Mammary epithelial cell (primary cell): ENCODE measurements at regions of chr1 and their contacts with region 1.

Region 1: GRCh38 chr1:16276302-16277030 is 39.5 kb upstream of the CPLANE2 start:
- DNase-seq: no peak
- H3K4me3 ChIP-seq: no peak overlapping the region
- H3K27ac ChIP-seq: no peak overlapping the region
- H3K4me1 ChIP-seq: no peaks in the 10 kb centered on the region
- H3K27me3 ChIP-seq: no peaks in the 10 kb centered on the region
- CTCF ChIP-seq: no peak

Region 2: DNA sequence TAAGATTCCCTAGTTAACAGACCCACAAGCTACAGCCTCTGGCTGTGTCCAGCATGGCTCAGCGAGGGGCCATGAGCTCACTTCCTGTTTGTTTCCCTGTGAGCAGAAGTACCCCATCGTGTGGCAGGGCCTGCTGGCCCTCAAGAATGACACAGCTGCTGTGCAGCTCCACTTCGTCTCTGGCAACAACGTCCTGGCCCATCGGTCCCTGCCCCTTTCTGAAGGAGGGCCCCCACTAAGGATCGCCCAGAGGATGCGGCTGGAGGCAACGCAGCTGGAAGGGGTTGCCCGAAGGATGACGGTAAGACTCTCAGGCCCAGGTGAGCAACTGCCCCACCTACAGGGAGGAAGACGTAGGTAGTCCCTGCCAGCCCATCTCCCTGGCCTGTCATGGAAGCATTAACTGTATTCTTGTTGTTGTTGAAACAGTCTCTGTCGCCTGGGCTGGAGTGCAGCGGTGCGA is 338.7 kb before region 1 on chr1:
- CTCF ChIA-PET with region 1: no interaction called
- dilution Hi-C with region 1: no loop called
- in situ Hi-C with region 1: no loop called
- intact Hi-C with region 1: no loop called
- DNase-seq: no peak
- H3K4me3 ChIP-seq: no peak overlapping the region
- H3K27ac ChIP-seq: no peak overlapping the region
- H3K4me1 ChIP-seq: no peaks in the 10 kb centered on the region
- H3K27me3 ChIP-seq: no peaks in the 10 kb centered on the region
- CTCF ChIP-seq: no peak

Region 3: DNA sequence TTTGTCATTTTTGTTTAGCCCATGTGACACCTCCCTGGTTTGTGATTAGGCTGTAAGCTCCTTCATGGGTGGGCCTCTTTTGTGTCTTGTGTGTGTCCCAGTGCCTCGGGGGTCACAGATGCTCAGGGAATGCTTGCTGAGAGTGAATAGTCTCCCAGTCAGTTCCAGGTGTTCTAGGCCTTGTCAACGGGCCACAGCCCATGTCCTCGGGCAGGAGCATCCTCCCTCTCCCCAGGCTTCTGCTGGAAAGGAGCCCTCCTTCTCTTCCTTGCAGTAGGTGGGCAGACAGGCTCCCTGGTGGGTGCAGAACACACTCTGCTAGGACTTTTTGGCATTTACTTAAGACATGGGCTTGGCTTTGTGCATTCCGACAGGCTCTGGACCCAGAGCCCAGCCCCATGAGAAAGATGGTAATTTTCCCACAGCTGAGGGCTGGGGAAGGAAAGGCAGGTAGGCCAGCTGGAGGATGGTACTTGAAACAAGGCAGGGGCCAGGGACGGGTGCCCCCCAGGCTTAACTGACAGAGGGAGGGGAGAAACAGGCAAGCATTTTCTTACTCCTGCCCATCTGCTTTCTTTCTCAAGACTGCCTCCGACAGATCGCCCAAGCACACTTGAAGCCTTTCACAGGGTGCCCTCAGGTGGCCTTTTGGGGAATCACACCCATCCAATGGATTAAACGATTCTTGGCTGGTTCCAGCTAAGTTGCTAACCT is 32.4 kb before region 1 on chr1:
- CTCF ChIA-PET with region 1: no interaction called
- dilution Hi-C with region 1: loop called (anchors 5 kb)
- in situ Hi-C with region 1: no loop called
- intact Hi-C with region 1: no loop called
- DNase-seq: peak; percentile 66
- H3K4me3 ChIP-seq: no peak overlapping the region
- H3K27ac ChIP-seq: no peak overlapping the region
- H3K4me1 ChIP-seq: peaks cover 12% of the 10 kb centered on the region
- H3K27me3 ChIP-seq: no peaks in the 10 kb centered on the region
- CTCF ChIP-seq: peak; percentile 86